ENCODE measurements at regions of chr5 and their contacts with region 1.

Region 1: DNA sequence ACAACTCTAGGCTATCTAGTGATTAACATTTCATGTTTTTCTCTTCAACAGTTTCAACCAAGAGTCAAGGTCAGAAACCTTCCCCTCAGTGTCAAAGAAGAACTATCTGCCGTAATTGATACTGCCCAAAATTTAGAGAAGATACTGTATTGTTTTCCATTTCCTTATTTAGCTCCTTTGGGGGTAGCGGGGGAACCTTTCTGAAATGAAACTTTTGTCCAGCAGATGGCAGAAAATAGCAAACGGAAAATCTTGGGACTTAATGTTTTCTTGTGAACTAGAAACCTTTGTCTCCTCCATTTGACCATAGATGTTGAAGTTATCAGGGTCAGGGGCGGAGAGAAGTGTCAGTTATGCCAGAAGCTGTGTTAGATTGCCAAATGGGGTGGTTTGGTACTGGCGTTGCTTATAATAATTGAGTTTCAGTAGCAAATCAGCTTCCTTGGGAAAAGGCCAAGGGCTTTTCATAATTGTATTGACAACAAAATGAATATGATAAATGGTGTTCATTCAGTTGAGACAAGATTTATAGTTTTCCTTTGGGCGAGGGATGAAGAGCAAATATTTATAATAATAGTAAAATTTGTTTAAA is 101.7 kb upstream of the TLX3 start:
- DNase-seq: no peak
- H3K4me3 ChIP-seq: no peak overlapping the region
- CTCF ChIP-seq: no peak
- POLR2A ChIP-seq: no peak

Region 2: GRCh38 chr5:170941788-170942187 is 265.6 kb before region 1 on chr5:
- intact Hi-C with region 1: loop called (anchors 5 kb)
- DNase-seq: no peak
- H3K4me3 ChIP-seq: no peak overlapping the region
- CTCF ChIP-seq: no peak
- POLR2A ChIP-seq: no peak

Region 3: DNA sequence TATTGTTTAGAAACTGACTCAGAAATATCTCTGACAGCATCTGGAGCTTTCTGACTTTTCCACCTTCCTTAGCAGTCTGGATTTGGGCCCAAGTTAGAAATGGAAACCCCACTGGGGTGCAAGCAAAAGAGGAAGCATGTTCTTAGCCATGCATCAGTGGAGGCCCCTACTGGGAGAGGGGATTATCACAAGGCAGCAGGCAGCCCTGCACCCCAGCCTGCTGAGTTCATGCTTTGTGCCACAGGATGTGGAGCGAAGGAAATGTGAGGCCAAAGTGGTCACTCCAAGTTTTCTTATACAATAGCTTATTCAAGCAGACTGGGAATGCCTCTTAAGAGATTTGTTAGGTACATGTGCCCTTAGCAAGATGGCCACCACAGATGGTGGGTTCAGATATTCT is 44.8 kb before region 1 on chr5:
- intact Hi-C with region 1: no loop called
- DNase-seq: no peak
- H3K4me3 ChIP-seq: no peak overlapping the region
- CTCF ChIP-seq: no peak
- POLR2A ChIP-seq: no peak

Measured in lower leg skin (tissue), 4 donors.